Heart left ventricle (tissue), 16 donors: ENCODE measurements at regions of chr1 and their contacts with region 1.

Region 1: GRCh38 chr1:10714337-10715114 is 81.9 kb downstream of the CASZ1 start:
- DNase-seq: peak in 4 of 5 donors; percentile 74 to 82 (median 78)
- ATAC-seq: peak; percentile 74 to 83 (median 81)
- H3K4me3 ChIP-seq: no peak overlapping the region
- H3K27ac ChIP-seq: peak overlapping the region in 11 of 12 donors; percentile 31 to 86 (median 71)
- H3K4me1 ChIP-seq: peaks cover 3 to 84% (median 48%) of the 10 kb centered on the region in 12 donors
- H3K27me3 ChIP-seq: peaks cover 0 to 8% (median 0%) of the 10 kb centered on the region in 9 donors
- CTCF ChIP-seq: no peak
- POLR2A ChIP-seq: no peak

Region 2: GRCh38 chr1:10755970-10756521 is 41.5 kb after region 1 on chr1:
- intact Hi-C with region 1: loop called in 1 of 10 experiments (anchors 5 kb)
- DNase-seq: peak; percentile 74 to 85 (median 82)
- ATAC-seq: peak; percentile 77 to 90 (median 82)
- H3K4me3 ChIP-seq: no peak overlapping the region
- H3K27ac ChIP-seq: peak overlapping the region; percentile 37 to 77 (median 69)
- H3K4me1 ChIP-seq: peaks cover 4 to 70% (median 41%) of the 10 kb centered on the region in 12 donors
- H3K27me3 ChIP-seq: no peaks in the 10 kb centered on the region
- CTCF ChIP-seq: peak in 1 of 12 donors; percentile 15
- POLR2A ChIP-seq: no peak

Region 3: GRCh38 chr1:10803971-10804820 is 89.7 kb after region 1 on chr1:
- intact Hi-C with region 1: no loop called
- DNase-seq: no peak
- ATAC-seq: peak in 2 of 4 donors; percentile 30 to 48
- H3K4me3 ChIP-seq: no peak overlapping the region
- H3K27ac ChIP-seq: no peak overlapping the region
- H3K4me1 ChIP-seq: no peaks in the 10 kb centered on the region
- H3K27me3 ChIP-seq: peaks cover 0 to 28% (median 0%) of the 10 kb centered on the region in 9 donors
- CTCF ChIP-seq: no peak
- POLR2A ChIP-seq: no peak